Prostate gland (tissue), 2 donors: ENCODE measurements at regions of chr1 and their contacts with region 1.

Region 1: GRCh38 chr1:48720929-48721328 is 55.8 kb downstream of the BEND5 start:
- DNase-seq: no peak
- H3K4me3 ChIP-seq: no peak overlapping the region
- H3K27ac ChIP-seq: no peak overlapping the region
- H3K4me1 ChIP-seq: no peaks in the 10 kb centered on the region
- H3K27me3 ChIP-seq: no peaks in the 10 kb centered on the region
- CTCF ChIP-seq: no peak
- POLR2A ChIP-seq: no peak

Region 2: DNA sequence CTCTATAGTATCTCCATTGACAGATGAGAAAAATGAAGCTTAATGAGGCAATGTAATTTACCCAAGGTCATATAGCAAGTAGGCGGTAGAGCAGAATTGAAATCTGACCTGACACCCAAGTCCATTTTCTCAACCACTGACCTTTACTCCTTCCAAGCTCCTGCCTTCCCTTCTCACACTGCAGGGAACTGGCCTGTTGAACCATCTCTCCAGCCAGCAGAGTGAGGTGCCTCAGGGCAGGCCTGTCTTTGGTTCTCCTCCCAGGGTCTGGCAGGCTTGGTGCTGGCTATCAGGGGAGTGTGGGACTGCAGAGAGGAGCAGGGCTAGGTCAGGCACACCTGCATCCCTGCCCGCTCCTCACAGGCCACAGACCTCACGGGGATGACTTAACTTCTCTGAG is 71.0 kb before region 1 on chr1:
- intact Hi-C with region 1: loop called (anchors 2 kb)
- DNase-seq: no peak
- H3K4me3 ChIP-seq: no peak overlapping the region
- H3K27ac ChIP-seq: no peak overlapping the region
- H3K4me1 ChIP-seq: no peaks in the 10 kb centered on the region
- H3K27me3 ChIP-seq: no peaks in the 10 kb centered on the region
- CTCF ChIP-seq: no peak
- POLR2A ChIP-seq: no peak